ENCODE measurements at regions of chr9 and their contacts with region 1.

Region 1: DNA sequence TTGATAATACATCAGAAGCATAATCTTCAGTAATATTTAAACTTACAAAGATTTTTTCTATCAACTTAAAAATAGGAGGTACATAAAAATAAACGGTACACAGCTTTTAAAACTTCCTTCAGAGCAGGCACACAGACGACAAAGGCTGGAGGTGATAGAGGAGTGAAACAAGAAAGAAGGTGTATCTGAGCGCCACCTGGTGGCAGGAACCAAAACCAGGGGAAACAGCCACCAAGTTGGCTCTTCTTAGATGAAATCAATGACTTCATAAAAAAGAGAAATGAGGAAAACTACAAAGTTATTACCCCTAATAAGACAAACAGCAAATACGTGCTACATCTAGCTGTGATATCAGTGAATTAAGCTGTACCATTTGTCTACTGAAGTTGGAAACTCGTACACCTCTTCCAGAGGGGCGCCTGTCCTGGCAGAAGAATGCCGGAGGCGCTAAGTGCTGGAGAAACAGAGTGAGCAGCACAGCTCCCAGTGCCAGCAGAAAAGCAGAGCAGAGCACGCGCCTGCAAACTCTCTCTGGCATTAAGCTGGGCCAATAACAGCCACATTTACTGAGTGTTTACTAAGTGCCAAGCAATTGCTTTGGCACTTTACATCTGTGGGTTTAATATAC is 85.9 kb downstream of the SETX start:
- DNase-seq: peak; percentile 59 to 65 (median 63)
- H3K4me3 ChIP-seq: no peak overlapping the region
- H3K4me3 Mint-ChIP-seq: no peak overlapping the region
- H3K27ac ChIP-seq: no peak overlapping the region
- H3K27ac Mint-ChIP-seq: peak overlapping the region in 6 of 7 donors; percentile 48 to 87 (median 66)
- H3K4me1 ChIP-seq: no peaks in the 10 kb centered on the region
- H3K4me1 Mint-ChIP-seq: peaks cover 3 to 6% (median 4%) of the 10 kb centered on the region in 4 donors
- H3K27me3 ChIP-seq: no peaks in the 10 kb centered on the region
- H3K27me3 Mint-ChIP-seq: no peaks in the 10 kb centered on the region

Region 2: GRCh38 chr9:131762356-131762932 is 506.4 kb before region 1 on chr9:
- CTCF ChIA-PET with region 1: interaction called, 10 read pairs
- POLR2A ChIA-PET with region 1: no interaction called
- intact Hi-C with region 1: loop called (anchors 1 kb)
- DNase-seq: peak; percentile 64 to 74 (median 67)
- H3K4me3 ChIP-seq: no peak overlapping the region
- H3K4me3 Mint-ChIP-seq: no peak overlapping the region
- H3K27ac ChIP-seq: no peak overlapping the region
- H3K27ac Mint-ChIP-seq: peak overlapping the region in 2 of 7 donors; percentile 19 to 35
- H3K4me1 ChIP-seq: peaks cover 7% of the 10 kb centered on the region
- H3K4me1 Mint-ChIP-seq: no peaks in the 10 kb centered on the region
- H3K27me3 ChIP-seq: no peaks in the 10 kb centered on the region
- H3K27me3 Mint-ChIP-seq: peaks cover 2 to 4% of the 10 kb centered on the region in 2 donors

Region 3: DNA sequence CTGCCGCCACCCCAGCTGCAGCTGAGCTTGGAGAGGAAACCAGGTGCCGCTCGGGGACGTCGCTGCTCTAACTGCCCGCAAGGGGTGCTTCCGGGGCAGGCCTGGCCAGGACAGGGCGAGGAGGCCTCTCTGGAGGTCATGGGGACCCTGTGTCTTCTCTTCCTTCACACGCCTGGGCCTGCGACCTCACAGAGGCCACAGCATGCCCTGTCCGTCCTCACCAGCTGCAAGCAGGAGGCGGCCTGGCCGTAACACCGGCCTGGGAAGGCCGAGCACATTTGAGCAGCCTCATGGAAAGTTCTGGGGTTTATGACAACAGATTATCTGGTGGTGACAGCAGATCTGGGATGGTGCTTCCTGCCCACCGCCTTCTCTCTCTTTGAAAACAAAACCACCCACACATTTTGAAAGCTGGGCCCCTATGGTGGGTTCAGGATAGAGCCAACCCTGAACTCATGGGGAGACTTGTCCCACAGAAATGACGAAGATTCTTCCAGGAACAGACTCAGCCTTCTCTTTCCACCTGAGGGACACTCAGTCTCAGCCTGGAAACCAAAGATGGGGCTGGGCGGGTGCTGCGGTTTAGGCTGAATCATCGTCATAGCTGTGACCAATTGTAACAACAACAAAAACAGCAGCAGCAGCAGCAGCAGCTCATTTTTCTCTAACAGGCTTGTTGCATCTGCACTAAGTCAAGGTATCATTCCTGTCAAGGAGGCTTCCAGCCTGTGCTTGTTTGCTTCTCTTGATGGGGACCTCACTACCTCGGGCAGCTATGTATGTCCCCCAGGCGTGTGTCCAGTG is 429.4 kb before region 1 on chr9:
- CTCF ChIA-PET with region 1: no interaction called
- POLR2A ChIA-PET with region 1: no interaction called
- intact Hi-C with region 1: no loop called
- DNase-seq: peak; percentile 37 to 81 (median 59)
- H3K4me3 ChIP-seq: no peak overlapping the region
- H3K4me3 Mint-ChIP-seq: peak overlapping the region; percentile 4 to 77 (median 50)
- H3K27ac ChIP-seq: no peak overlapping the region
- H3K27ac Mint-ChIP-seq: peak overlapping the region; percentile 90 to 98 (median 94)
- H3K4me1 ChIP-seq: peaks cover 23% of the 10 kb centered on the region
- H3K4me1 Mint-ChIP-seq: peaks cover 3 to 22% (median 10%) of the 10 kb centered on the region in 4 donors
- H3K27me3 ChIP-seq: no peaks in the 10 kb centered on the region
- H3K27me3 Mint-ChIP-seq: peaks cover 0 to 7% of the 10 kb centered on the region in 2 donors

Region 4: GRCh38 chr9:131954299-131954698 is 314.5 kb before region 1 on chr9:
- CTCF ChIA-PET with region 1: no interaction called
- POLR2A ChIA-PET with region 1: no interaction called
- intact Hi-C with region 1: no loop called
- DNase-seq: no peak
- H3K4me3 ChIP-seq: no peak overlapping the region
- H3K4me3 Mint-ChIP-seq: no peak overlapping the region
- H3K27ac ChIP-seq: no peak overlapping the region
- H3K27ac Mint-ChIP-seq: peak overlapping the region in 1 of 7 donors; percentile 25
- H3K4me1 ChIP-seq: no peaks in the 10 kb centered on the region
- H3K4me1 Mint-ChIP-seq: peaks cover 0 to 6% (median 0%) of the 10 kb centered on the region in 4 donors
- H3K27me3 ChIP-seq: no peaks in the 10 kb centered on the region
- H3K27me3 Mint-ChIP-seq: no peaks in the 10 kb centered on the region

Region 5: GRCh38 chr9:132288361-132288760 is 19.5 kb after region 1 on chr9:
- CTCF ChIA-PET with region 1: interaction called, 11 read pairs
- POLR2A ChIA-PET with region 1: no interaction called
- intact Hi-C with region 1: no loop called
- DNase-seq: no peak
- H3K4me3 ChIP-seq: no peak overlapping the region
- H3K4me3 Mint-ChIP-seq: no peak overlapping the region
- H3K27ac ChIP-seq: no peak overlapping the region
- H3K27ac Mint-ChIP-seq: peak overlapping the region in 4 of 7 donors; percentile 31 to 68 (median 53)
- H3K4me1 ChIP-seq: peaks cover 5% of the 10 kb centered on the region
- H3K4me1 Mint-ChIP-seq: peaks cover 6 to 18% (median 13%) of the 10 kb centered on the region in 4 donors
- H3K27me3 ChIP-seq: no peaks in the 10 kb centered on the region
- H3K27me3 Mint-ChIP-seq: no peaks in the 10 kb centered on the region